Left colon (tissue), 2 donors: ENCODE measurements at regions of chr6 and their contacts with region 1.

Region 1: GRCh38 chr6:18748314-18748713 is 361.2 kb downstream of the RNF144B start:
- DNase-seq: no peak
- ATAC-seq: no peak

Region 2: DNA sequence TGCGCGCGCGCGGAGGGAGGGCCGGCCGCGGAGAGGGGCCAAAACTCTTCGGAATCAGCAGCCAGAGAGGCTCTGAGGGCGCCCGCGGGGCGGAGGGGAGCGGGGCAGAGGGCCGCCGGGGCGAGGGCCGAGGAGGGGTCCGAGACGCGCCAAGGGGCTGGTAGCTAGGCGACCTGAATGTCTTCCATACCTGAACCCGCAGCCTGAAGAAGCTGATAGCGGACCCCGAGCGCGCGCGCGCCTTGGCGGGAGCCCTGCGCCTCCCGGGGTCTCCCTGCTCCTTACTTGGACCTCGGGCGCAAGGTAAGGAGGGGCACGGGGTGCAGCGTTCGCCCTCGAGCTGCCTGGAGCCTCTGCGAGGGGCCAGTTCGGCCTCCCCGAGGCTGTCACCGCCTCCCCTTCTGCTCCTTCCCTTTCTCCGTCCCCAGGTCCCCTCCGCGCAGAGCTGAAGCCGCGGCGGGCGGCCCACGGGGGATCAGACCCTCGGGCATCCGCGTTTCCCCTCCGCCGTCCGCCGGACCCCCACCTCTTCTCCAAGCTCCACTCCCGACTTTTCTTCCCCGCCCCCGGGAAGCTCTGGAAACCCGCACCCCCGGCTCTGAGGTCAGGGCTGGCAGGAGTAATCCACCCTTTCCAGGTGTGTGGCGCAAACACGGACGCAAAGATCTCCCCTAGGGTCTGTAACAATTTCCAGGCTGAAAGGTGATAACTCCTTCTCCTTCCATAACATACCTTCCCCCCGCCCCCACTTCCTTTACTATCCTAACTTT is 470.9 kb before region 1 on chr6:
- intact Hi-C with region 1: no loop called
- DNase-seq: no peak
- ATAC-seq: no peak

Region 3: DNA sequence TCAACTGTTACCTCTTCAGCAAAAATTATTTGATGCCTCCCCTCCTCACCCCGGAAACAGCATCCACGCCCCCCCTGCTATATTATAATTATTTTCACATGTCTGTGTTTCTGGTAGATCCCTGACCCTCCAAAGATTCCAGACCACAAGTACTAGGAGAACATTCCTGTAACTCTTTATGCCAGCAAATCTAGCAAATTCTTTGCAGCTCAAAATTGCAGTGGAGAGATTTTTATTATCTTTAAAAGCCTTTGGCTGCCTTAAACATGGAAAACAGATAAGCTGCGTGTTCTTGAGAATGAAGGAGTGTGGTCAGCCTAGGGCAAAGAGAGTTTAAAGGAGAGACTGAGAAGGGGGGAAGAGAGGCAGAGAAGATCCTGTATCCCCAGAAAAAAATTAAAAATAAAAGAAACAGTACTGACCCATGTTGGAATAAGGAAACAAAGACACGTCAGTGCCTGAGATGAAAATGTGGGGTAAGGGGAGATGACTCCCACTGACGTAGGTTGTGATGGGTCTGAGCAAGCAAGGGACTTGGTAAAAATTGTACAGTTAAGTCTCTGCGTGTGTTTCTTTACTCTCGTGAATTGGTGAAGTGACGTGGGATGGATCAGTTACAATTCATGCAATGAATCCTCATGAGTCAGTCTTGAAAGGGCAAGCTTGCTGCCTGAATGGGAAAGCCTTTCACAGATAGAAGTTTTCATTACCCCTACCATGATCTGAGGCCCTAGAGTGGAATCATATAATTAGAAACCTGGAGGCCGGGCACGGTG is 1097.1 kb after region 1 on chr6:
- intact Hi-C with region 1: loop called in 1 of 2 experiments (anchors 5 kb)
- DNase-seq: no peak
- ATAC-seq: no peak